ENCODE measurements at regions of chr20 and their contacts with region 1.

Region 1: GRCh38 chr20:35654415-35654814 is 10.3 kb downstream of the CPNE1 start:
- DNase-seq: no peak
- ATAC-seq: no peak
- H3K4me3 ChIP-seq: no peak overlapping the region
- H3K27ac ChIP-seq: no peak overlapping the region
- H3K4me1 ChIP-seq: no peaks in the 10 kb centered on the region
- H3K27me3 ChIP-seq: no peaks in the 10 kb centered on the region
- CTCF ChIP-seq: no peak
- EP300 ChIP-seq: no peak
- POLR2A ChIP-seq: 0 out of 2 replicates have a peak, but pooled peaks have one; percentile 10
- RAD21 ChIP-seq: no peak

Region 2: GRCh38 chr20:35849706-35850105 is 195.3 kb after region 1 on chr20:
- CTCF ChIA-PET with region 1: no interaction called
- POLR2A ChIA-PET with region 1: interaction called, 10 read pairs
- RAD21 ChIA-PET with region 1: no interaction called
- SMC1A ChIA-PET with region 1: no interaction called
- in situ Hi-C with region 1: no loop called
- intact Hi-C with region 1: no loop called
- DNase-seq: no peak
- ATAC-seq: no peak
- H3K4me3 ChIP-seq: no peak overlapping the region
- H3K27ac ChIP-seq: no peak overlapping the region
- H3K4me1 ChIP-seq: no peaks in the 10 kb centered on the region
- H3K27me3 ChIP-seq: no peaks in the 10 kb centered on the region
- CTCF ChIP-seq: no peak
- EP300 ChIP-seq: no peak
- POLR2A ChIP-seq: no peak
- RAD21 ChIP-seq: no peak

Measured in GM12878 (cell line).